B cell (primary cell): ENCODE measurements at regions of chr9 and their contacts with region 1.

Region 1: GRCh38 chr9:124197177-124198095 is 60.3 kb upstream of the NEK6 start:
- DNase-seq: peak; percentile 88
- ATAC-seq: peak; percentile 84
- H3K4me3 ChIP-seq: peak overlapping the region in 4 of 5 experiments; percentile 22 to 42 (median 30)
- H3K4me3 Mint-ChIP-seq: peak overlapping the region; percentile 81
- H3K27ac ChIP-seq: peak overlapping the region; percentile 82 to 90
- H3K27ac Mint-ChIP-seq: peak overlapping the region; percentile 99
- H3K4me1 ChIP-seq: peaks cover 53 to 59% of the 10 kb centered on the region in 2 donors
- H3K4me1 Mint-ChIP-seq: peaks cover 57% of the 10 kb centered on the region
- H3K27me3 ChIP-seq: no peaks in the 10 kb centered on the region
- H3K27me3 Mint-ChIP-seq: no peaks in the 10 kb centered on the region
- CTCF ChIP-seq: peak; percentile 33

Region 2: GRCh38 chr9:123893831-123894460 is 303.5 kb before region 1 on chr9:
- CTCF ChIA-PET with region 1: no interaction called
- POLR2A ChIA-PET with region 1: no interaction called
- intact Hi-C with region 1: no loop called
- DNase-seq: no peak
- ATAC-seq: no peak
- H3K4me3 ChIP-seq: no peak overlapping the region
- H3K4me3 Mint-ChIP-seq: no peak overlapping the region
- H3K27ac ChIP-seq: no peak overlapping the region
- H3K27ac Mint-ChIP-seq: no peak overlapping the region
- H3K4me1 ChIP-seq: no peaks in the 10 kb centered on the region
- H3K4me1 Mint-ChIP-seq: peaks cover 17% of the 10 kb centered on the region
- H3K27me3 ChIP-seq: no peaks in the 10 kb centered on the region
- H3K27me3 Mint-ChIP-seq: no peaks in the 10 kb centered on the region
- CTCF ChIP-seq: no peak

Region 3: GRCh38 chr9:124210697-124211096 is 13.3 kb after region 1 on chr9:
- CTCF ChIA-PET with region 1: interaction called, 44 read pairs
- POLR2A ChIA-PET with region 1: interaction called, 4 read pairs
- intact Hi-C with region 1: loop called (anchors 1 kb)
- DNase-seq: peak; percentile 79
- ATAC-seq: peak; percentile 75
- H3K4me3 ChIP-seq: no peak overlapping the region
- H3K4me3 Mint-ChIP-seq: peak overlapping the region; percentile 69
- H3K27ac ChIP-seq: peak overlapping the region; percentile 26 to 69
- H3K27ac Mint-ChIP-seq: peak overlapping the region; percentile 80
- H3K4me1 ChIP-seq: peaks cover 82 to 88% of the 10 kb centered on the region in 2 donors
- H3K4me1 Mint-ChIP-seq: peaks cover 93% of the 10 kb centered on the region
- H3K27me3 ChIP-seq: no peaks in the 10 kb centered on the region
- H3K27me3 Mint-ChIP-seq: no peaks in the 10 kb centered on the region
- CTCF ChIP-seq: no peak

Region 4: GRCh38 chr9:124285903-124286291 is 88.5 kb after region 1 on chr9:
- CTCF ChIA-PET with region 1: interaction called, 11 read pairs
- POLR2A ChIA-PET with region 1: interaction called, 7 read pairs
- intact Hi-C with region 1: loop called (anchors 1 kb)
- DNase-seq: peak; percentile 85
- ATAC-seq: peak; percentile 42
- H3K4me3 ChIP-seq: peak overlapping the region in 2 of 5 experiments; percentile 7 to 48
- H3K4me3 Mint-ChIP-seq: peak overlapping the region; percentile 84
- H3K27ac ChIP-seq: peak overlapping the region; percentile 73 to 86
- H3K27ac Mint-ChIP-seq: peak overlapping the region; percentile 96
- H3K4me1 ChIP-seq: peaks cover 63 to 88% of the 10 kb centered on the region in 2 donors
- H3K4me1 Mint-ChIP-seq: peaks cover 87% of the 10 kb centered on the region
- H3K27me3 ChIP-seq: no peaks in the 10 kb centered on the region
- H3K27me3 Mint-ChIP-seq: no peaks in the 10 kb centered on the region
- CTCF ChIP-seq: no peak

Region 5: GRCh38 chr9:124291801-124292396 is 94.5 kb after region 1 on chr9:
- CTCF ChIA-PET with region 1: interaction called, 11 read pairs
- POLR2A ChIA-PET with region 1: interaction called, 3 read pairs
- intact Hi-C with region 1: no loop called
- DNase-seq: peak; percentile 79
- ATAC-seq: peak; percentile 54
- H3K4me3 ChIP-seq: peak overlapping the region in 3 of 5 experiments; percentile 10 to 25 (median 20)
- H3K4me3 Mint-ChIP-seq: peak overlapping the region; percentile 43
- H3K27ac ChIP-seq: peak overlapping the region; percentile 55 to 63
- H3K27ac Mint-ChIP-seq: peak overlapping the region; percentile 80
- H3K4me1 ChIP-seq: peaks cover 68 to 87% of the 10 kb centered on the region in 2 donors
- H3K4me1 Mint-ChIP-seq: peaks cover 91% of the 10 kb centered on the region
- H3K27me3 ChIP-seq: no peaks in the 10 kb centered on the region
- H3K27me3 Mint-ChIP-seq: no peaks in the 10 kb centered on the region
- CTCF ChIP-seq: peak; percentile 35

Region 6: GRCh38 chr9:124800306-124801259 is 603.1 kb after region 1 on chr9:
- CTCF ChIA-PET with region 1: no interaction called
- POLR2A ChIA-PET with region 1: no interaction called
- intact Hi-C with region 1: no loop called
- DNase-seq: peak; percentile 86
- ATAC-seq: peak; percentile 92
- H3K4me3 ChIP-seq: peak overlapping the region in 2 of 5 experiments; percentile 31 to 50
- H3K4me3 Mint-ChIP-seq: peak overlapping the region; percentile 77
- H3K27ac ChIP-seq: peak overlapping the region; percentile 84 to 94
- H3K27ac Mint-ChIP-seq: peak overlapping the region; percentile 96
- H3K4me1 ChIP-seq: peaks cover 39 to 46% of the 10 kb centered on the region in 2 donors
- H3K4me1 Mint-ChIP-seq: peaks cover 36% of the 10 kb centered on the region
- H3K27me3 ChIP-seq: peaks cover 0 to 3% (median 0%) of the 10 kb centered on the region in 4 experiments
- H3K27me3 Mint-ChIP-seq: no peaks in the 10 kb centered on the region
- CTCF ChIP-seq: no peak